Activated CD4-positive, alpha-beta memory T cell treated with anti-CD3 and anti-CD28 coated beads for 36 hours (primary cell): ENCODE measurements at regions of chr9 and their contacts with region 1.

Region 1: GRCh38 chr9:6353851-6354686 is 25.9 kb downstream of the TPD52L3 start:
- DNase-seq: peak; percentile 23
- H3K4me3 Mint-ChIP-seq: no peak overlapping the region
- H3K27ac Mint-ChIP-seq: no peak overlapping the region
- H3K4me1 Mint-ChIP-seq: peaks cover 16% of the 10 kb centered on the region
- H3K27me3 Mint-ChIP-seq: peaks cover 4% of the 10 kb centered on the region

Region 2: DNA sequence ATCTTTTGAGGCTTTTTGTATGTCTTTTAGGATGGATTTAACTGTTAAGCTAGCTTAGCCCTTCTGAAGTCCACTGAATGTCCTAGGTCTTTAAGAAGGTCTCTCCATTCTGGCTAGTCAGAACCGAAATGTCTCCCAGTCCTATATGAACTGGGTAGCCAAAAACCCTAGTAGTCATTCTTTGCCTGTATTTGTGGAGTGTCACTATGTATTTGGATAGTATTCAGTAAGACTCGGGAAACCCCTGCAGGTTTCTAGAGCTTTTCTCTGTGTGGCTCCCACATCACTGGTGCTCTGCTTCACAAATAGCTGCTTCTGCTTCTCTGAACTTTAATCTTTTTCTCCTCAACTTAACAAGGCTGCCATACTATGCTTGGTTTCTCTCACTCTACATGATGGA is 657.2 kb before region 1 on chr9:
- CTCF ChIA-PET with region 1: no interaction called
- POLR2A ChIA-PET with region 1: no interaction called
- intact Hi-C with region 1: no loop called
- DNase-seq: no peak
- H3K4me3 Mint-ChIP-seq: no peak overlapping the region
- H3K27ac Mint-ChIP-seq: no peak overlapping the region
- H3K4me1 Mint-ChIP-seq: peaks cover 14% of the 10 kb centered on the region
- H3K27me3 Mint-ChIP-seq: no peaks in the 10 kb centered on the region

Region 3: GRCh38 chr9:6305954-6306563 is 48.0 kb before region 1 on chr9:
- CTCF ChIA-PET with region 1: no interaction called
- POLR2A ChIA-PET with region 1: no interaction called
- intact Hi-C with region 1: no loop called
- DNase-seq: no peak
- H3K4me3 Mint-ChIP-seq: no peak overlapping the region
- H3K27ac Mint-ChIP-seq: no peak overlapping the region
- H3K4me1 Mint-ChIP-seq: no peaks in the 10 kb centered on the region
- H3K27me3 Mint-ChIP-seq: no peaks in the 10 kb centered on the region

Region 4: GRCh38 chr9:6488395-6488794 is 134.3 kb after region 1 on chr9:
- CTCF ChIA-PET with region 1: interaction called, 12 read pairs
- POLR2A ChIA-PET with region 1: no interaction called
- intact Hi-C with region 1: loop called (anchors 10 kb)
- DNase-seq: no peak
- H3K4me3 Mint-ChIP-seq: no peak overlapping the region
- H3K27ac Mint-ChIP-seq: no peak overlapping the region
- H3K4me1 Mint-ChIP-seq: peaks cover 3% of the 10 kb centered on the region
- H3K27me3 Mint-ChIP-seq: no peaks in the 10 kb centered on the region

Region 5: GRCh38 chr9:6498982-6499381 is 144.9 kb after region 1 on chr9:
- CTCF ChIA-PET with region 1: no interaction called
- POLR2A ChIA-PET with region 1: no interaction called
- intact Hi-C with region 1: loop called (anchors 10 kb)
- DNase-seq: no peak
- H3K4me3 Mint-ChIP-seq: no peak overlapping the region
- H3K27ac Mint-ChIP-seq: peak overlapping the region; percentile 36
- H3K4me1 Mint-ChIP-seq: peaks cover 12% of the 10 kb centered on the region
- H3K27me3 Mint-ChIP-seq: no peaks in the 10 kb centered on the region

Region 6: DNA sequence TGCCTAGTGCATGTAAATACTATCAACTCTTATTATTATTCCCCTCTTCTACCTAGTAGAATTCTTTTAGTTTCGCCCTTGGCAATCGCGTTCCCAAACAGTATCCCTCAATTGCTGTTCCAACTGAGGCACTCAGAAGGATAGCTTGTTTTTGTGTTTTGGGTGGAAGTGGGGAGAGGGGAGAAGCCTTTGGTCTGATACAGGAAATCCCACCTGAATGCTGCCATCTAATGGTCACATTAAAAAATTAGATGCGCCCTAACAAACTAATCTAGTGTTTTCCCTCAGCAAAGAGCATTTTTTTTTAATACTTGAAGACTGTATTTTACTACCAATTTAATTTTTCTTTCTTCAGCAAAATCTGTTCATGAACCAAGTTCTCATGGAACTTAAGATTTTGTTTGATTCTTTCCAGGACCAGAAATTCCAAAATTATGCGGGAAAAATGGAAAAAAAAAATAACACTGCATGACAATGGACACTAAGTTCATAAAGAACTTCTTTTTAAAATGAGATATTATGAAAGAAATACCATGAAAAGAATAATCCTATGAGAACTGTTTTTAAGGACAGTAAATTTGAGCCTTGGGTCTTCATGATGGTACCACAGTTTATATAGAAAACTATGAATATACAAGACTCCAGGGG is 313.7 kb after region 1 on chr9:
- CTCF ChIA-PET with region 1: interaction called, 7 read pairs
- POLR2A ChIA-PET with region 1: no interaction called
- intact Hi-C with region 1: loop called (anchors 2 kb)
- DNase-seq: no peak
- H3K4me3 Mint-ChIP-seq: no peak overlapping the region
- H3K27ac Mint-ChIP-seq: no peak overlapping the region
- H3K4me1 Mint-ChIP-seq: no peaks in the 10 kb centered on the region
- H3K27me3 Mint-ChIP-seq: no peaks in the 10 kb centered on the region